Activated CD8-positive, alpha-beta T cell treated with anti-CD3 and anti-CD28 coated beads for 36 hours (primary cell): ENCODE measurements at regions of chr4 and their contacts with region 1.

Region 1: DNA sequence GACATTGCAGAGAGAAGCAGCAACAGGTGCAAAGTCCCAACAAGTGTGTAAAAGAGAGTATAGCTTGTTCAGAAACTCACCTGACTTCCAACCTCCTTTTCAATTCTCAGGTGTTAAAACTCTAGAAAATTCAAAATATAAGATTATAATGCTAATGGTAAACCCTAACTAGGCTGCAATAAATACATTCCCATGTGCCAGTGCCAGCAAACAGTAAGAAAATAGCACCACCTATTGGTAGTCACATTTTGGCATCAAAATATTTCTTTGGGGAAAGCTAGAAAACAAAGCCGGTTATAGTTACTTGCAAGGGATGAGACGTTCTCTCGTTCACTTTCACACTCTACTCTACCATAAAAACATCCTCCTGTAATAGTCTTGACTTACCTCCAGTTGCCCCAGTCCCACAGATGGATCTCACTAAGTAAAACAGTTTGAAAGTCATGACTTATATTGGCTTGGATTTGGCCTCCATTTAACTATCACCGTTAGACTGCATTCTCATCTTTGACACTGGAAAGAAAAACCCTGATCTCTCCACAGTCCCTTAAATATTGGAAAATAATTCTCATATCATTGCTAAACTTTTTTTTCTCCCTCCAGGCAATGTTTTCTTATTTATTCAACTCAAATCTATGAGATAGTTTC is 9.6 kb downstream of the BMP3 start:
- DNase-seq: no peak
- ATAC-seq: no peak
- H3K4me3 Mint-ChIP-seq: no peak overlapping the region
- H3K27ac Mint-ChIP-seq: no peak overlapping the region
- H3K4me1 Mint-ChIP-seq: no peaks in the 10 kb centered on the region
- H3K27me3 Mint-ChIP-seq: peaks cover 13% of the 10 kb centered on the region
- CTCF ChIP-seq: peak; percentile 71

Region 2: GRCh38 chr4:80365928-80366327 is 674.2 kb before region 1 on chr4:
- CTCF ChIA-PET with region 1: interaction called, 19 read pairs
- POLR2A ChIA-PET with region 1: no interaction called
- intact Hi-C with region 1: loop called (anchors 5 kb)
- DNase-seq: peak; percentile 68
- ATAC-seq: peak; percentile 77
- H3K4me3 Mint-ChIP-seq: no peak overlapping the region
- H3K27ac Mint-ChIP-seq: no peak overlapping the region
- H3K4me1 Mint-ChIP-seq: peaks cover 2% of the 10 kb centered on the region
- H3K27me3 Mint-ChIP-seq: no peaks in the 10 kb centered on the region
- CTCF ChIP-seq: peak; percentile 72

Region 3: GRCh38 chr4:80989921-80990544 is 50.1 kb before region 1 on chr4:
- CTCF ChIA-PET with region 1: interaction called, 18 read pairs
- POLR2A ChIA-PET with region 1: no interaction called
- intact Hi-C with region 1: no loop called
- DNase-seq: peak; percentile 7
- ATAC-seq: no peak
- H3K4me3 Mint-ChIP-seq: no peak overlapping the region
- H3K27ac Mint-ChIP-seq: no peak overlapping the region
- H3K4me1 Mint-ChIP-seq: no peaks in the 10 kb centered on the region
- H3K27me3 Mint-ChIP-seq: peaks cover 3% of the 10 kb centered on the region
- CTCF ChIP-seq: peak; percentile 82

Region 4: GRCh38 chr4:81052119-81053068 is 12.3 kb after region 1 on chr4:
- CTCF ChIA-PET with region 1: interaction called, 21 read pairs
- POLR2A ChIA-PET with region 1: no interaction called
- intact Hi-C with region 1: no loop called
- DNase-seq: peak; percentile 63
- ATAC-seq: no peak
- H3K4me3 Mint-ChIP-seq: no peak overlapping the region
- H3K27ac Mint-ChIP-seq: no peak overlapping the region
- H3K4me1 Mint-ChIP-seq: no peaks in the 10 kb centered on the region
- H3K27me3 Mint-ChIP-seq: no peaks in the 10 kb centered on the region
- CTCF ChIP-seq: peak; percentile 74